ENCODE measurements at regions of chr14 and their contacts with region 1.

Region 1: DNA sequence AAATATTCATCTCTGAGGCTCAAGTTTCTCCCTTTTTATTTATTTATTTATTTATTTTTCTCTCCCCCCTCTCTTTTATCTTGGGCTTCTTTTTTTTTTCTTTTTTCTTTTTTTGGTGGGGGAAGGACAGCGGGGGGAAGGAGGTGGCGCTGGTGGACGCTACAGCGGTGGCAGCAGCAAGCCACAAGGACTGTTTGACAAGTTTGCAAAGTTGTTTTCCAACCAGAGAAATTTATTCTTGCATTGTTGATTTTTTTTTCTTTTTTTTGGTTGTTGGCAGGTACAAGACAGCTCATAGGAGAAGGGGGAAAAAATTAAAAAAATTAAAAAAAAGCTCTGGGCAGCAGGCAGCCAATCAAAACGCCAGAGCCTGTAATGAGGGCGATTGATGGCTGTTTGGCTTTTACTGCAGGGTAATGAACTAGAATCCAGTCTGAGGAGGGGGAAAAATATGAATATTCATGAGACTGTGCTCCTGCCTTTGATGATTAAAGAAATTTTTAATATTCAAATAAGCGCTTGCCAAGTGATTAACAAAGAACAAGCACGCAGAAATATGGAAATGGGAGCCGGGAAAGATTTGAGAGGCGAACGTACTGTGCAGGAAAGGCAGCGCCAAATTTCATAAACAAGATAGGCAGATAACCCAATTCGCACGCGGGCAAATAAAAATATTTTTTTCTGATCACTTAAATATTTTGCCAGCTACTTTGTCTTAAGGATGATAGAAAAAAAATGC is 36.2 kb downstream of the BCL11B start:
- DNase-seq: no peak
- H3K4me3 Mint-ChIP-seq: peak overlapping the region; percentile 76
- H3K27ac Mint-ChIP-seq: peak overlapping the region; percentile 96
- H3K4me1 Mint-ChIP-seq: peaks cover 91% of the 10 kb centered on the region
- H3K27me3 Mint-ChIP-seq: no peaks in the 10 kb centered on the region

Region 2: GRCh38 chr14:99260587-99261551 is 25.1 kb after region 1 on chr14:
- CTCF ChIA-PET with region 1: interaction called, 110 read pairs
- POLR2A ChIA-PET with region 1: interaction called, 425 read pairs
- intact Hi-C with region 1: no loop called
- DNase-seq: peak; percentile 71
- H3K4me3 Mint-ChIP-seq: peak overlapping the region; percentile 96
- H3K27ac Mint-ChIP-seq: peak overlapping the region; percentile 100
- H3K4me1 Mint-ChIP-seq: peaks cover 85% of the 10 kb centered on the region
- H3K27me3 Mint-ChIP-seq: no peaks in the 10 kb centered on the region

Region 3: GRCh38 chr14:99609245-99610117 is 373.7 kb after region 1 on chr14:
- CTCF ChIA-PET with region 1: no interaction called
- POLR2A ChIA-PET with region 1: no interaction called
- intact Hi-C with region 1: no loop called
- DNase-seq: peak; percentile 27
- H3K4me3 Mint-ChIP-seq: no peak overlapping the region
- H3K27ac Mint-ChIP-seq: no peak overlapping the region
- H3K4me1 Mint-ChIP-seq: peaks cover 5% of the 10 kb centered on the region
- H3K27me3 Mint-ChIP-seq: peaks cover 2% of the 10 kb centered on the region